HEK293 (cell line): ENCODE measurements at regions of chr14 and their contacts with region 1.

Region 1: GRCh38 chr14:54805521-54806322 is 96.9 kb downstream of the GCH1 start:
- H3K4me3 ChIP-seq: no peak overlapping the region
- H3K27ac ChIP-seq: no peak overlapping the region
- H3K4me1 ChIP-seq: no peaks in the 10 kb centered on the region
- CTCF ChIP-seq: peak; percentile 48; the same call in 1 of the 2 replicates

Region 2: GRCh38 chr14:54756656-54757392 is 48.9 kb before region 1 on chr14:
- CTCF ChIA-PET with region 1: no interaction called
- POLR2A ChIA-PET with region 1: no interaction called
- H3K4me3 ChIP-seq: no peak overlapping the region
- H3K27ac ChIP-seq: no peak overlapping the region
- H3K4me1 ChIP-seq: no peaks in the 10 kb centered on the region
- CTCF ChIP-seq: no peak

Region 3: DNA sequence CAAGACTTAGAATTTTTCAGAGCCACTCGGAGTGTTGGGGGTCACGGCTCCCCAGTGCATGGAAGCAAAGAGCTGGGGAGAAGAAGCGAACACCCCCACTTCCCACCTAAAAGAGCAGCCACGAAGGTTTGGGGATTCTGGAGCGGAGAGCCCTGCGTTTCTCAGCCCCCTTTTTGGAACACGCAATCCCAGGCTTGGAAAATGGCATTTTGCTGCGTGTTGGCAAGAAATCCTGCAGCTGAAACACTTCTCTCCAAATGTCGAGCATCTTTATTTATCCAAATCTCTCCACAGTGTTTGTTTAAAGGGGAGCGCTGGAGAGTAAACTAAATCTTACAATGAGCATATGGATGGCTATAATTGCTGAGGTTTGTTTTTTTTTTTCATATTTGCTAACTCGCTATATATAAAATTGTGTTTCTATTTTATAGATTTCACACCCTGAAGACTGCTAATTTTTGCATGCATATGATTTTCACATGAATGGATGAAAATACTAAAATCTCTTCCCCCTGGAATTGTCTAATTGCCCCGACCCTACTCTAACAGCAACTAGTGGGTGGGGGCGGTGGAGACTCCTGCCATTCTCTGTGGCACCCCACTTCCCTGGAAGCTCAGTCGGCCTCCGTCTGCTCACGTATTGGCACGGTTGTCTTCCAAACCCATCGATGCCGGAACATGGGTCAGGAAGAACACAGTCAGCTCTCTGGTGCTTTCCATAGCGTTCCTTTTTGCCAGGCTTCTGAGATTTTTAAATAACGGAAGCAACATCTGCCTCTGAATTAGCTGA is 23.6 kb before region 1 on chr14:
- CTCF ChIA-PET with region 1: no interaction called
- POLR2A ChIA-PET with region 1: no interaction called
- H3K4me3 ChIP-seq: no peak overlapping the region
- H3K27ac ChIP-seq: no peak overlapping the region
- H3K4me1 ChIP-seq: no peaks in the 10 kb centered on the region; the same call in 1 of the 2 replicates
- CTCF ChIP-seq: no peak

Region 4: DNA sequence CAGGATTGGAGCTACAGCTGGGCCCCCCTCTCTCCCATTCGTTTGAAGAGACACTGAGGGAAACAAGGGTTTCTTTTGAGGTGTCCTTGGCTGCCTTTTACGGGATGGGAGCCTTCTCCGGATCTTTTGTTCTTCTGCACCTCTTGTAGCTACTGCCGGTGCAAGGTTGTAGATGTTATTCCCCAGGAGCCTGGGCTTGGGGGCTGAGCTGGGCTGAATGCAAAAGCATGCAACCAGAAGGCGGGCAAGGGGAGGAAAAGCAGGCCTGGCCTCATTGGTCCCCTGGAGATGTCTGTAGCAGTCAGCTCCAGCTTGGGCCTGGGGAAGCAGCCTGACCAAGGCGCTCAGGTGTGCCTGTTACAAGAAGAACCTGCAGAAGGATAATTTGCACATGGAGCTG is 13.4 kb before region 1 on chr14:
- CTCF ChIA-PET with region 1: interaction called, 15 read pairs
- POLR2A ChIA-PET with region 1: no interaction called
- H3K4me3 ChIP-seq: no peak overlapping the region
- H3K27ac ChIP-seq: no peak overlapping the region
- H3K4me1 ChIP-seq: no peaks in the 10 kb centered on the region
- CTCF ChIP-seq: no peak

Region 5: DNA sequence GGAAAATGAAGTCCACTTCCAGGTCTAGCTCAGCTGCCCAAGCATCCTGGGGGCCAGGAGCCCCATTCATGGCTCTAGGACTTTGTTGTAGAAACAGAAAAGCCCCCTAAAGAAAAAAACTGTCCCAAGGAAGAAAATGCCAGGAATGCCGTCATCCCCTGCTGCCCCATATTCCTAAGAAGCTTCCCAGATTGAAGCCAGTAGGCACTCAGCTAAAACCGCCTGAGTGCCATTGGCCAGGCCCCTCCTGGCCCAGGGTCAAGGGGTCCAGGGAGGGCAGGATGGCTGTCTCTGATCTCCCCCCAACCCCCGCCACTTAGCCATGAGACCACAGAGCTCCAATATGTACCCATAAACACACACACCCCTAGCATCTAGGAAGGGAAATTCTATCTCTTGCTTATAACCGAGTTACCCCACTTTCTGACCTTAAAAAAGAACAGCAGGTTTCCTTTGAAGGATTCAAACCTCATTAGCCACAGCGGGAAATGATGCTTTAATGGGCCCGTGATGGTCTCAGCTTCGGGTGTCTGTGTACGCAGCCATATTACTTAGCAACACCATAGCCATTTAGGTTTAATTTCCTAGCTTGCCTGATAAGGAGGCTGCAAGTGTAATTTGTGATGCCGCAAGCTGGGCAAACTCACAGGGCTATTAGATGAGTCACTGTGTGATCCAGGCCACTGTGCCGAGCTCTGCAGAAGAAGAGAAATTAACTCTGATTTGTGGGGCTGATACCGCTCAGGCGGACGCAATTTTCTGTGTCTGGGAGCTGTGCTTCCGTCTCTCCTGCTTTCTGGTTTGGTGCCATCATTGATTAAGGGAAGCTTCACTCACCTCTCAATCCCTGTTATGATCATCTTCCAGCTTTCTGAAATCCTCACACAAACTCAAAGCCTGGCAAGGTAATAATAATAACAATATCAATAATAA is 12.7 kb after region 1 on chr14:
- CTCF ChIA-PET with region 1: interaction called, 27 read pairs
- POLR2A ChIA-PET with region 1: no interaction called
- H3K4me3 ChIP-seq: no peak overlapping the region
- H3K27ac ChIP-seq: peak overlapping the region; percentile 24; the same call in 1 of the 2 replicates
- H3K4me1 ChIP-seq: peaks cover 11% of the 10 kb centered on the region
- CTCF ChIP-seq: no peak

Region 6: GRCh38 chr14:55316567-55316966 is 510.8 kb after region 1 on chr14:
- CTCF ChIA-PET with region 1: no interaction called
- POLR2A ChIA-PET with region 1: no interaction called
- H3K4me3 ChIP-seq: no peak overlapping the region
- H3K27ac ChIP-seq: no peak overlapping the region
- H3K4me1 ChIP-seq: no peaks in the 10 kb centered on the region
- CTCF ChIP-seq: no peak